ENCODE measurements at regions of chr5 and their contacts with region 1.

Region 1: GRCh38 chr5:126280846-126281245 is 142.4 kb upstream of the GRAMD2B start:
- DNase-seq: no peak
- H3K4me3 ChIP-seq: no peak overlapping the region
- H3K27ac ChIP-seq: no peak overlapping the region
- H3K4me1 ChIP-seq: no peaks in the 10 kb centered on the region
- H3K27me3 ChIP-seq: no peaks in the 10 kb centered on the region
- CTCF ChIP-seq: no peak

Region 2: GRCh38 chr5:126208711-126209305 is 72.0 kb before region 1 on chr5:
- CTCF ChIA-PET with region 1: interaction called, 11 read pairs
- POLR2A ChIA-PET with region 1: no interaction called
- intact Hi-C with region 1: no loop called
- DNase-seq: peak in 1 of 2 experiments; percentile 34
- H3K4me3 ChIP-seq: no peak overlapping the region
- H3K27ac ChIP-seq: no peak overlapping the region
- H3K4me1 ChIP-seq: no peaks in the 10 kb centered on the region
- H3K27me3 ChIP-seq: no peaks in the 10 kb centered on the region
- CTCF ChIP-seq: no peak

Measured in PC-9 (cell line).